ENCODE measurements at regions of chr20 and their contacts with region 1.

Region 1: GRCh38 chr20:1437235-1437904 is 29.3 kb downstream of the NSFL1C start:
- DNase-seq: peak; percentile 87
- H3K4me3 Mint-ChIP-seq: peak overlapping the region; percentile 20
- H3K27ac Mint-ChIP-seq: no peak overlapping the region
- H3K4me1 Mint-ChIP-seq: peaks cover 27% of the 10 kb centered on the region
- H3K27me3 Mint-ChIP-seq: no peaks in the 10 kb centered on the region

Region 2: DNA sequence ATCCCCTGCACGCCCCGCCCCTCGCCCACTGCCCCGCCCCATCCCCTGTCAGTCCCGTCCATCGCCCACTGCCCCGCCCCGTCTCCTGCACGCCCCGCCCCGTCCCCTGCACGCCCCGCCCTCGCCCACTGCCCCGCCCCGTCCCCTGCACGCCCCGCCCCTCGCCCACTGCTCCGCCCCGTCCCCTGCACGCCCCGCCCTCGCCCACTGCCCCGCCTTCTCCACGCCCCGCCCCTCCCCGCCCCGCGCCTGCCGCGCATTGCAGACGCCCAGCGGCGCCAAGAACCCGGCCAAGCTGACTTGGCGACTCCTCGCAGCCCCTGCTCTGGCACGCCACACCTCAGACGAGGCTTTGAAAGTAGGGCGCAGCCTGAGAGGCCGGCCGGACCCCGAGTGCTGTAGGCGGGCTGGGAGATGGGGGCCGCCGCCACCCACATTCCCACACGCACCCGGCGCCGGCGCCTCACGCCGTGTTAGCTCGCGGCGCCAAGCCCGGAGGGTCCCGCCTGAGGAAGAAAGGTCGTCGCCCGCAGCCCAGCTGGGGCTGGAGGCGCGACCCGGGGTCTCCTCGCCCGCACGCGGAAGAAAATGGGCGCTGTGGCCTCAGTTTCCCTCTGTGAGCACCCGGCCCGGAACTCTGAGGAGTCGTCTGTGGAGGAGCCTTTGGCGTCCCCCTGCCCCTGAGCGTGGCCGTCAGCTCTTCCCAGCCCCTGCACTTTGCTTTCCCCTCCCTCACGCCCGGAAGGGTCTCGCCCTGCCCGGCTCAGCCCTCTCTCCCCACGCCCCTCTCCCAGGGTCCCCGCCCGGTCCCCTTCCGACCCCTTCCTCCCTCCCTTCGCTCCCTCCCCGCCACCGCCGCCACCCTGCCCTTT is 211.4 kb before region 1 on chr20 and contains the start of gene RAD21L1:
- CTCF ChIA-PET with region 1: no interaction called
- POLR2A ChIA-PET with region 1: no interaction called
- intact Hi-C with region 1: loop called (anchors 5 kb)
- DNase-seq: peak; percentile 89
- H3K4me3 Mint-ChIP-seq: peak within 1 kb of the TSS; percentile 79
- H3K27ac Mint-ChIP-seq: no peak within 1 kb of the TSS
- H3K4me1 Mint-ChIP-seq: peaks cover 9% of the 10 kb centered on the region
- H3K27me3 Mint-ChIP-seq: peaks cover 15% of the 10 kb centered on the region
- total RNA-seq, gene RAD21L1: not detected

Region 3: GRCh38 chr20:1313236-1313964 is 124.0 kb before region 1 on chr20:
- CTCF ChIA-PET with region 1: interaction called, 59 read pairs
- POLR2A ChIA-PET with region 1: no interaction called
- intact Hi-C with region 1: loop called (anchors 1 kb)
- DNase-seq: peak; percentile 70
- H3K4me3 Mint-ChIP-seq: no peak overlapping the region
- H3K27ac Mint-ChIP-seq: no peak overlapping the region
- H3K4me1 Mint-ChIP-seq: peaks cover 13% of the 10 kb centered on the region
- H3K27me3 Mint-ChIP-seq: no peaks in the 10 kb centered on the region

Region 4: DNA sequence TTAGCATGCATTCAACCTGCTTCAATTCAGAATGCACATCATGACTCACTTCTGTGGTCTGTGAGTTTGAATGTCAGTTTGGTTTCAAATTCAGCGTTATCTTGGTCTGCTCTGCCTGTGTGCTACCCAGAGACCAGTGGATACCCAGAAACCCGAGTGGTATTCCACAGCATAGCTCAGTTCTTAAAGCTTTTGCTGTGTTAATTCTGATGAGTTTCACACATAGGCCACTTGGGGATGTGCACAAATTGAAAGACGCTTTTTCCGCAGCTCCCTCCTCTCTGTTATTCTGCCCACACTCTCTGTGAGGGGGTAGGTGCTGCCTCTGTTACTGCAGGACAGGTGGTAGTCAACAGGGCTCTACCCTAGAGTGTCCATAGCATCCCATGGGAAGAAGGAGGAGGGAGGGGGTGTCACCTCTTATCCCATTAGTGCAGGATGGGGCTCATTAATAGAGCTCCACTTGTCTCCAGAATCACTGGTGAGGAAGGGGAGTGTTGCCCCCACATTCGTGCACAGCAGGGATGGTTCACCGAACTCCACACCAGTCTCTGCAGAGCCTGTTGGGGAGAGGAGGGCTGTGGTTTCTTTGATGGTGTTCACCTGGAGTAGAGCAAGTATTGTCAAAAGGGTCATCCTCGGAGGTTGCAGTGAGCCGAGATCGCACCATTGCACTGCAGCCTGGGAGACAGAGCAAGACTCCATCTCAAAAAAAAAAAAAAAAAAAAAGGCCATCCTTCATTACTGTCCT is 79.3 kb before region 1 on chr20:
- CTCF ChIA-PET with region 1: interaction called, 5 read pairs
- POLR2A ChIA-PET with region 1: no interaction called
- intact Hi-C with region 1: loop called (anchors 1 kb)
- DNase-seq: peak; percentile 64
- H3K4me3 Mint-ChIP-seq: peak overlapping the region; percentile 23
- H3K27ac Mint-ChIP-seq: peak overlapping the region; percentile 72
- H3K4me1 Mint-ChIP-seq: peaks cover 58% of the 10 kb centered on the region
- H3K27me3 Mint-ChIP-seq: no peaks in the 10 kb centered on the region

Region 5: DNA sequence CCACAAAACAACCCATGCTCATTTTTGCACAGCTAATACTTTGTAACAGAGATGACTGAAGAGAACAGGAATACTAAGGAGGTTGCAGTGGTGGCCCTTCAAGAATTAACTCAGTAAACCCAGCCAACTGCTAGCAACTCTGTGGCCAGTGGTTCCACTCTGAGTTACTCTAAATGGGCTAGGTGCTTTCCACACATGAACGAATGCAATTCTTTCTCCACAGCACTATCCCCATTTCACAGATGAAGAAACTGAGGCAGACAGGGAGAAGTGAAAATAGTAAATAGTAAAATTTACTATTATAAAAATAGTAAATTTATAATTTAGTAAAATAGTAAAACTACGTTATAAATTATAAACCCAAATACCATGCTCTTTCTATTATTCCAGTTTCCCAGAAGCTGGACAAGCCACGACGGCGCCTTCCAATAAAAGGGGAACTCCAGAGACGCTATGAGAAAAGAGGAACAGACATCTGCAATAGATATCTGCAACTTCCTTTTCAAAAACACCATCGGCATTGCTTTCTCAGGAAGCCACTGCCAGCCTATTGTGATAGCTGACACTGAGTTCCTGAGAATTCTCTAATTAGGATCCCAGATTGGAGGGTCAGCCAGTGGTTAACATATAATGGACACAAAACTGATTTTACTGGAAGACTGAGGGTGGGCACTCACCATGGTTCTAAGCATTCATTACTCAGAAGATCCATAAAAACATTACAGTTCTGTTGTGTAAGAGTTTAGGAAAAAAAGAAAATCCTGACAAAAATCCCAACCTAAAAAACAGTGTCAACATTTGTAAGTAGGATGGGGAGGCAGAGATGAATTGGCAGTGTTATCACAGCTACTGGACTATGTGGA is 60.7 kb before region 1 on chr20:
- CTCF ChIA-PET with region 1: no interaction called
- POLR2A ChIA-PET with region 1: no interaction called
- intact Hi-C with region 1: no loop called
- DNase-seq: no peak
- H3K4me3 Mint-ChIP-seq: peak overlapping the region; percentile 22
- H3K27ac Mint-ChIP-seq: peak overlapping the region; percentile 95
- H3K4me1 Mint-ChIP-seq: peaks cover 76% of the 10 kb centered on the region
- H3K27me3 Mint-ChIP-seq: no peaks in the 10 kb centered on the region

Region 6: GRCh38 chr20:1474825-1475603 is 37.6 kb after region 1 on chr20:
- CTCF ChIA-PET with region 1: no interaction called
- POLR2A ChIA-PET with region 1: no interaction called
- intact Hi-C with region 1: no loop called
- DNase-seq: no peak
- H3K4me3 Mint-ChIP-seq: no peak overlapping the region
- H3K27ac Mint-ChIP-seq: no peak overlapping the region
- H3K4me1 Mint-ChIP-seq: no peaks in the 10 kb centered on the region
- H3K27me3 Mint-ChIP-seq: peaks cover 8% of the 10 kb centered on the region

Region 7: DNA sequence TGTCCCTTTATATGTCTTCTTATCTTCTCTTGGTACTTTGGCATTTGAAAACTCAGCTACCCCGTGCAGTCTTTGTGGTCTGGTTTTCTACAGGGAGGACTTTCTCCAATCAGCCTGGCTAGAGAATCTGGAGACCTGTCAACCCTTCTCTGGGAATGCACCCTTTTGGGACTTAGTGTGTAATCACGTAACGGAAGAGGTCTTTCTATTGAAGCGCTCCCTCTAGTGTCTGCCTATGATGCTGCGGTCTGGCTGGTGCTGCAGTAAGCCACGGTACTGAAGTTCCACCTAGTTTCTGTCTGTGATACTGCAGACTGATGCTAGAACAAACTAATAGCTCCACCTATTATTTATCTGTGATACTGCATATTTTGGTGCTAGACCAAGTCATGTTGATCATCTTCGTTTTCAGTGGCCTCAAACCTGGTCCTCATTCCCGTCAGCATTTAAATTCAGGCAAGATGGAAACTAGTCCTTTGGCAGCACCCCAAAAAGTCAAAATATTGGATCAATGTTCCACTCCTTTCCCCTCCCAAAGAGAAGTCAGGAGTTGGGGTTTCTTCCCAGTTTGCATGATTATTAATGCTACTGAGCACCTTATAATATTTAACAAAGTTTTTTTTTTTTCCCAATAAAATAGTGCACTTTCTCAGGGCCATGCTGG is 66.3 kb after region 1 on chr20:
- CTCF ChIA-PET with region 1: interaction called, 8 read pairs
- POLR2A ChIA-PET with region 1: no interaction called
- intact Hi-C with region 1: loop called (anchors 2 kb)
- DNase-seq: peak; percentile 83
- H3K4me3 Mint-ChIP-seq: no peak overlapping the region
- H3K27ac Mint-ChIP-seq: no peak overlapping the region
- H3K4me1 Mint-ChIP-seq: peaks cover 3% of the 10 kb centered on the region
- H3K27me3 Mint-ChIP-seq: peaks cover 17% of the 10 kb centered on the region

Region 8: GRCh38 chr20:1870792-1871550 is 433.6 kb after region 1 on chr20:
- CTCF ChIA-PET with region 1: no interaction called
- POLR2A ChIA-PET with region 1: no interaction called
- intact Hi-C with region 1: no loop called
- DNase-seq: no peak
- H3K4me3 Mint-ChIP-seq: no peak overlapping the region
- H3K27ac Mint-ChIP-seq: no peak overlapping the region
- H3K4me1 Mint-ChIP-seq: no peaks in the 10 kb centered on the region
- H3K27me3 Mint-ChIP-seq: peaks cover 20% of the 10 kb centered on the region